ENCODE measurements at regions of chr2 and their contacts with region 1.

Region 1: DNA sequence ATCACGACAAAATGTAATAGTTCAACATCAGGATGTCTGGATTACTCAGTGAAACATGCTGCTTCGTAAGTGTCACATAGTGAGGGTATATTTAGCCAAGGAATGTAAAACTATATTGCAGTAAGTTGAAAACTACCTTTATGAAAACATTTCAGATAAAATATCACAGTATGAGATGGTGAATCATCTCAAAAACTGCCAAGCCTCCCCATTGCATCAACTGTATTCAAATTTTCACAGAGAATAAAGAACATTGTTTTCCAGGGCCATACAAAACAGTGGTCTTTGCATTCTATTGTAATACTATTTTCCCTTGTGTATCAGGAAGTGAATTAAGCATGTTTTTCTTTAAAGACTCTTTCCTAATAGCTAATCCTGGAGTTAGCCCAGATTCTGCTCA is 47.6 kb upstream of the MSTN start:
- DNase-seq: no peak
- H3K4me3 ChIP-seq: no peak overlapping the region
- H3K27ac ChIP-seq: no peak overlapping the region
- H3K4me1 ChIP-seq: no peaks in the 10 kb centered on the region
- H3K27me3 ChIP-seq: no peaks in the 10 kb centered on the region
- CTCF ChIP-seq: no peak
- POLR2A ChIP-seq: no peak

Region 2: DNA sequence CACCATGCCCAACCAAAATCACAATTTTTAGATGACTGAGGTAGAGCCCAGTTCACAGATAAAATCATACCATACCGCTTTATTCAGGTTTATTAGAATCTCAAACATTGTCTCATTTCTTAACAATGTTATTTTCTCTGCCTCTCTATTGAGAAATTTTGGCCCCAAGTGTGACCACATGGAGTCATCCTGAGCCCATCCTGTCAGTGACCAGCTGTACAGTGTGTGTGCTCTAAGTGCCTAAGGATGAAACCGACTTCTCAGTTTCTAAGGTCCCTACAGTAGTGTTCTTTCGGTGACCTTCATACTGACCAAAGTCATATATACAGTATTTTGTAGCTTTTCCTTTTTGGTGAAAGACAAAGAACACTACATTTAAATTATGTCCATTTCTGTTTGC is 76.1 kb after region 1 on chr2:
- intact Hi-C with region 1: loop called (anchors 5 kb)
- DNase-seq: no peak
- H3K4me3 ChIP-seq: no peak overlapping the region
- H3K27ac ChIP-seq: peak overlapping the region; percentile 8 to 28
- H3K4me1 ChIP-seq: no peaks in the 10 kb centered on the region
- H3K27me3 ChIP-seq: no peaks in the 10 kb centered on the region
- CTCF ChIP-seq: no peak
- POLR2A ChIP-seq: no peak

Measured in breast epithelium (tissue), 4 donors.